ENCODE measurements at regions of chr2 and their contacts with region 1.

Region 1: GRCh38 chr2:181466661-181467576 is 9.7 kb downstream of the ITGA4 start:
- DNase-seq: peak; percentile 32
- ATAC-seq: peak; percentile 72; the same call in 2 of the 3 replicates
- H3K4me3 ChIP-seq: no peak overlapping the region
- H3K27ac ChIP-seq: no peak overlapping the region
- H3K4me1 ChIP-seq: no peaks in the 10 kb centered on the region
- H3K27me3 ChIP-seq: no peaks in the 10 kb centered on the region
- CTCF ChIP-seq: peak; percentile 76
- EP300 ChIP-seq: no peak
- POLR2A ChIP-seq: no peak
- RAD21 ChIP-seq: peak; percentile 30; the same call in 1 of the 2 replicates

Region 2: DNA sequence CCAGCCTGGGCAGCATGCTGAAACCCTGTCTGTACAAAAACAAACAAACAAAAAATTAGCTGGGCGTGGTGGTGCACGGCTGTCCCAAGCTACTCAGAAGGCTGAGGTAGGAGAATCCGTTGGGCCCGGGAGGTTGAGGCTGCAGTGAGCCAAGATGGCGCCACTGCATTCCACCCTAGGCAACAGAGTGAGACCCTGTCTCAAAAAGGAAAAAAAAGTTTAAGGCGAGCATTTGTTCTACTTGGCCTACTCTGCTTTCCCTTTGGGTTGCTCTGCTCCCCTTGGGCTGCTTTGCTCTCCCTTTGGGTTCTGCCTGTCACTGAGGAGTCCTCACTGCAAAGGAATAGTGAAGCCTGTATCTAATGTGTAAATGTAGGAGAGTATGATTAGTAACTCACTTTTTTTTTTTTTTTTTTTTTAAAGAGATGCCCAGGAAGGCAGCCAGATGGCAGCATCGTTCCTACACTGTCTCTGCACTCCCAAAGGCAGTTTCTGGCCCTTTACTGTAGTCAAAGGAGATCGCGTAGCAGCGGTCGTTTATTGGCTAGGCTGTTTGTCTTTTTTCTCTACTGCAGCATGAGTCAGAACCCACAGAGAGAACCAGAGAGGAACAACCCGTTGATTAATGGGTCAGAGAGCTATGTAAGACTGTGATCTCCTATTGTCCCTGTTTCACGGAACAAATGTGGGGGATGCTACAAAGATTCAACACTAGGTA is 1341.5 kb before region 1 on chr2:
- CTCF ChIA-PET with region 1: interaction called, 18 read pairs
- POLR2A ChIA-PET with region 1: no interaction called
- in situ Hi-C with region 1: loop called (anchors 10 kb)
- intact Hi-C with region 1: loop called (anchors 1 kb)
- DNase-seq: peak; percentile 78
- ATAC-seq: peak; percentile 96
- H3K4me3 ChIP-seq: no peak overlapping the region; a peak in 1 of 6 replicates
- H3K27ac ChIP-seq: no peak overlapping the region
- H3K4me1 ChIP-seq: peaks cover 5% of the 10 kb centered on the region; the same call in 1 of the 2 replicates
- H3K27me3 ChIP-seq: no peaks in the 10 kb centered on the region
- CTCF ChIP-seq: peak; percentile 67
- EP300 ChIP-seq: no peak
- POLR2A ChIP-seq: no peak
- RAD21 ChIP-seq: 0 out of 2 replicates have a peak, but pooled peaks have one; percentile 20

Region 3: GRCh38 chr2:181077128-181077709 is 389.7 kb before region 1 on chr2:
- CTCF ChIA-PET with region 1: interaction called, 7 read pairs
- POLR2A ChIA-PET with region 1: no interaction called
- in situ Hi-C with region 1: no loop called
- intact Hi-C with region 1: loop called (anchors 1 kb)
- DNase-seq: peak; percentile 60
- ATAC-seq: peak; percentile 94
- H3K4me3 ChIP-seq: no peak overlapping the region
- H3K27ac ChIP-seq: no peak overlapping the region
- H3K4me1 ChIP-seq: no peaks in the 10 kb centered on the region
- H3K27me3 ChIP-seq: no peaks in the 10 kb centered on the region
- CTCF ChIP-seq: peak; percentile 77
- EP300 ChIP-seq: no peak
- POLR2A ChIP-seq: no peak
- RAD21 ChIP-seq: no peak; the same call in 1 of the 2 replicates

Region 4: GRCh38 chr2:181104512-181105115 is 362.3 kb before region 1 on chr2:
- CTCF ChIA-PET with region 1: interaction called, 27 read pairs
- POLR2A ChIA-PET with region 1: no interaction called
- in situ Hi-C with region 1: loop called (anchors 10 kb)
- intact Hi-C with region 1: loop called (anchors 1 kb)
- DNase-seq: peak; percentile 34
- ATAC-seq: peak; percentile 69
- H3K4me3 ChIP-seq: no peak overlapping the region
- H3K27ac ChIP-seq: no peak overlapping the region
- H3K4me1 ChIP-seq: no peaks in the 10 kb centered on the region
- H3K27me3 ChIP-seq: no peaks in the 10 kb centered on the region
- CTCF ChIP-seq: peak; percentile 71
- EP300 ChIP-seq: no peak
- POLR2A ChIP-seq: no peak
- RAD21 ChIP-seq: 0 out of 2 replicates have a peak, but pooled peaks have one; percentile 52

Region 5: GRCh38 chr2:181178823-181179412 is 288.0 kb before region 1 on chr2:
- CTCF ChIA-PET with region 1: interaction called, 6 read pairs
- POLR2A ChIA-PET with region 1: no interaction called
- in situ Hi-C with region 1: no loop called
- intact Hi-C with region 1: loop called (anchors 1 kb)
- DNase-seq: peak; percentile 43
- ATAC-seq: peak; percentile 98
- H3K4me3 ChIP-seq: no peak overlapping the region
- H3K27ac ChIP-seq: no peak overlapping the region
- H3K4me1 ChIP-seq: no peaks in the 10 kb centered on the region
- H3K27me3 ChIP-seq: no peaks in the 10 kb centered on the region
- CTCF ChIP-seq: peak; percentile 64
- EP300 ChIP-seq: no peak
- POLR2A ChIP-seq: no peak
- RAD21 ChIP-seq: no peak

Region 6: DNA sequence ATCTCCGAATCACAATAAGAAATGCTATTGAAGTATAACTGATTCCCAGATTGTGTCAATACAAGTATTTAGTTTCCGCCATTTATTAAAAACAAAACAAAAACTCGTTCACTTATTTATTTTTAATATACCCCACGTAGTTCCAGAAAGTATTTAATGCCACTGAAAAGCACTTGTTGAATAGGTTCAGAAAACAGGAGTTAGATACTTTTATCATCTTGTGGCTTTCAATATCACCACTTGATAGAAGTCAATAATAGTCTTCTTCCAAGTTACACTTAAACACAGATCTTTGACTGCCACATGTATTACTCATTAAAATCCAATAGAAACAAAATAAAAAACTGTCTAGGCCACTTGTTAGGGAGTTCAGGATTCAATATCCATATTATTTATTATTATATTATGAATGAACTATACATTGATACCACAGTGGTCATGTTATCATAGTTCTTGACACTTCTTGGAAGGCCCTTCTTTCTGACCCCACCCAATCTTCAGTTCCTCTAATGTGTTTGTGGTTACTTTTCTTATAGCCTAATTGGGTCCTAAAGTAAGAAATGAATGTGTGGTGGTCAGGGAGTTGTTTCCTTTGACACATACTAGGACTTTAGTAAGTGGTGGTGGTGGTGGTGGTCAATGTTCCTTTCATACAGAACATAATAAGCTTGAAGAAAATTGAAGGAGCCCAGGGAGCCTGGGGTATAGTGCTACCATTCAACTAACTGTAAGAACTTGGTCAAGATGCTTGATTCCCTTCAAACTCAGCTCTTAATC is 231.0 kb before region 1 on chr2:
- CTCF ChIA-PET with region 1: no interaction called
- POLR2A ChIA-PET with region 1: no interaction called
- in situ Hi-C with region 1: no loop called
- intact Hi-C with region 1: loop called (anchors 5 kb)
- DNase-seq: no peak
- ATAC-seq: no peak
- H3K4me3 ChIP-seq: no peak overlapping the region
- H3K27ac ChIP-seq: no peak overlapping the region
- H3K4me1 ChIP-seq: no peaks in the 10 kb centered on the region
- H3K27me3 ChIP-seq: no peaks in the 10 kb centered on the region
- CTCF ChIP-seq: no peak
- EP300 ChIP-seq: no peak
- POLR2A ChIP-seq: no peak
- RAD21 ChIP-seq: no peak

Region 7: GRCh38 chr2:181483876-181484275 is 17.0 kb after region 1 on chr2:
- CTCF ChIA-PET with region 1: no interaction called
- POLR2A ChIA-PET with region 1: no interaction called
- in situ Hi-C with region 1: no loop called
- intact Hi-C with region 1: no loop called
- DNase-seq: no peak
- ATAC-seq: no peak
- H3K4me3 ChIP-seq: no peak overlapping the region
- H3K27ac ChIP-seq: no peak overlapping the region
- H3K4me1 ChIP-seq: no peaks in the 10 kb centered on the region
- H3K27me3 ChIP-seq: no peaks in the 10 kb centered on the region; a peak in 1 of 5 replicates
- CTCF ChIP-seq: no peak
- EP300 ChIP-seq: no peak
- POLR2A ChIP-seq: no peak
- RAD21 ChIP-seq: no peak

Measured in HepG2 (cell line).